Naive thymus-derived CD4-positive, alpha-beta T cell (primary cell): ENCODE measurements at regions of chr7 and their contacts with region 1.

Region 1: GRCh38 chr7:127514499-127514898 is 70.9 kb downstream of the GCC1 start:
- DNase-seq: peak in 7 of 9 donors; percentile 14 to 59 (median 41)
- ATAC-seq: peak; percentile 75
- H3K4me3 ChIP-seq: no peak overlapping the region
- H3K4me3 Mint-ChIP-seq: no peak overlapping the region
- H3K27ac ChIP-seq: no peak overlapping the region
- H3K27ac Mint-ChIP-seq: no peak overlapping the region
- H3K4me1 ChIP-seq: no peaks in the 10 kb centered on the region
- H3K4me1 Mint-ChIP-seq: no peaks in the 10 kb centered on the region
- H3K27me3 ChIP-seq: peaks cover 0 to 3% of the 10 kb centered on the region in 2 donors
- H3K27me3 Mint-ChIP-seq: peaks cover 13 to 43% (median 29%) of the 10 kb centered on the region in 5 donors

Region 2: DNA sequence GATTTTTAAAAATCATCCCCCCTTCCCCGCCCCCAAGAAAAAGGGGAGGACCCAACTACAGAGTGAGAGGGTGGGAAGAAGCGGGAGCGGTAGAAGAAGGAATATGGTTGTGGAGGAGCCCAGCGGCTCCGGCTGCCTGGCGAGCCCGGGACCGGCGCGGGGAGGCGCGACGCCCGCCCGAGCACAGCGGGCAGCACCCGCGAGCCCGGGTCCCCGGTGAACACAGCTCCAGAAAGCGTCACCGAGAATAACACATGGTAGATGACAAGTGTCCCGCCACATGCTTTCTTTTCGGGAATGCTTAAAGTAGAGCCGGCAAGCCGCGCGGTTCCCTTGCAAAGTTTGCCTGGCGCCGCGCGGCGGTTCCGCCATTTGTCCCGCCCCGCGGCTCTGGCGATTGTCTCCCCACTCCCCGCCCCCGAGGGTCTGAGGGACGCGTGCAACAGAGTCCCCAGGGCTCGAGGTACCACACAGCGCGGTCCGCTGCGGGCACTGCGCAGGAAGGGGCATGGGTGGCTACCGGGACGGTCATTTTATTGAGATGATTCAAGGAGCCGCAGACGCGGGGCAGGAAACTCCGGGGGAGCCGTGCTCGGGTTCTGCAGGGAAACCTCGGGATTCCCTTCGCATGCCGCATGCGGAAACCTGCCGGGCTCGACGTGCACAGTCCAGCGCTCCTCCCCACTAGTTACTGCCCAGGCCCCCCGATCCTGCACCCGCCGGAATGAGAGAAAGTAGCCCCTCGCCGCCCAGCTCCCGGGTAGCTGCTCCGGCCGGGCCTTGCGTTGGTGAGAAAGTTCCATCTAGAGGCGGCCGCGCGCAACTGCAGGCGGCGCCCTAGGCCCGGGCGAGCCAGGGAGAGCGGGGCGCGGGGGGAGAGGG is 261.0 kb before region 1 on chr7:
- CTCF ChIA-PET with region 1: interaction called, 4 read pairs
- POLR2A ChIA-PET with region 1: no interaction called
- intact Hi-C with region 1: loop called in 1 of 2 experiments (anchors 1 kb)
- DNase-seq: peak; percentile 13 to 64 (median 41)
- ATAC-seq: peak; percentile 84
- H3K4me3 ChIP-seq: peak overlapping the region; percentile 76
- H3K4me3 Mint-ChIP-seq: peak overlapping the region; percentile 76 to 93 (median 88)
- H3K27ac ChIP-seq: no peak overlapping the region
- H3K27ac Mint-ChIP-seq: no peak overlapping the region
- H3K4me1 ChIP-seq: peaks cover 12 to 16% of the 10 kb centered on the region in 2 donors
- H3K4me1 Mint-ChIP-seq: peaks cover 12 to 32% (median 25%) of the 10 kb centered on the region in 7 donors
- H3K27me3 ChIP-seq: peaks cover 3 to 27% of the 10 kb centered on the region in 2 donors
- H3K27me3 Mint-ChIP-seq: peaks cover 65 to 83% (median 73%) of the 10 kb centered on the region in 5 donors

Region 3: GRCh38 chr7:128020159-128020558 is 505.7 kb after region 1 on chr7:
- CTCF ChIA-PET with region 1: no interaction called
- POLR2A ChIA-PET with region 1: no interaction called
- intact Hi-C with region 1: no loop called
- DNase-seq: peak in 1 of 9 donors; percentile 9
- ATAC-seq: no peak
- H3K4me3 ChIP-seq: no peak overlapping the region
- H3K4me3 Mint-ChIP-seq: no peak overlapping the region
- H3K27ac ChIP-seq: no peak overlapping the region
- H3K27ac Mint-ChIP-seq: peak overlapping the region in 1 of 9 donors; percentile 3
- H3K4me1 ChIP-seq: no peaks in the 10 kb centered on the region
- H3K4me1 Mint-ChIP-seq: peaks cover 0 to 14% (median 4%) of the 10 kb centered on the region in 7 donors
- H3K27me3 ChIP-seq: no peaks in the 10 kb centered on the region
- H3K27me3 Mint-ChIP-seq: no peaks in the 10 kb centered on the region